Activated CD4-positive, alpha-beta T cell treated with anti-CD3 and anti-CD28 coated beads, Interleukin-2, amount 10 ng/mL, durations not matched to agents 24 days and 14 days (primary cell): ENCODE measurements at regions of chr5 and their contacts with region 1.

Region 1: GRCh38 chr5:74576941-74577456 is 63.5 kb downstream of the ENC1 start:
- DNase-seq: peak; percentile 79
- H3K4me3 Mint-ChIP-seq: peak overlapping the region; percentile 50
- H3K27ac Mint-ChIP-seq: peak overlapping the region; percentile 30
- H3K4me1 Mint-ChIP-seq: peaks cover 35% of the 10 kb centered on the region
- H3K27me3 Mint-ChIP-seq: peaks cover 5% of the 10 kb centered on the region

Region 2: GRCh38 chr5:73902327-73903051 is 674.5 kb before region 1 on chr5:
- intact Hi-C with region 1: loop called (anchors 2 kb)
- DNase-seq: peak; percentile 70
- H3K4me3 Mint-ChIP-seq: no peak overlapping the region
- H3K27ac Mint-ChIP-seq: no peak overlapping the region
- H3K4me1 Mint-ChIP-seq: peaks cover 4% of the 10 kb centered on the region
- H3K27me3 Mint-ChIP-seq: peaks cover 26% of the 10 kb centered on the region

Region 3: DNA sequence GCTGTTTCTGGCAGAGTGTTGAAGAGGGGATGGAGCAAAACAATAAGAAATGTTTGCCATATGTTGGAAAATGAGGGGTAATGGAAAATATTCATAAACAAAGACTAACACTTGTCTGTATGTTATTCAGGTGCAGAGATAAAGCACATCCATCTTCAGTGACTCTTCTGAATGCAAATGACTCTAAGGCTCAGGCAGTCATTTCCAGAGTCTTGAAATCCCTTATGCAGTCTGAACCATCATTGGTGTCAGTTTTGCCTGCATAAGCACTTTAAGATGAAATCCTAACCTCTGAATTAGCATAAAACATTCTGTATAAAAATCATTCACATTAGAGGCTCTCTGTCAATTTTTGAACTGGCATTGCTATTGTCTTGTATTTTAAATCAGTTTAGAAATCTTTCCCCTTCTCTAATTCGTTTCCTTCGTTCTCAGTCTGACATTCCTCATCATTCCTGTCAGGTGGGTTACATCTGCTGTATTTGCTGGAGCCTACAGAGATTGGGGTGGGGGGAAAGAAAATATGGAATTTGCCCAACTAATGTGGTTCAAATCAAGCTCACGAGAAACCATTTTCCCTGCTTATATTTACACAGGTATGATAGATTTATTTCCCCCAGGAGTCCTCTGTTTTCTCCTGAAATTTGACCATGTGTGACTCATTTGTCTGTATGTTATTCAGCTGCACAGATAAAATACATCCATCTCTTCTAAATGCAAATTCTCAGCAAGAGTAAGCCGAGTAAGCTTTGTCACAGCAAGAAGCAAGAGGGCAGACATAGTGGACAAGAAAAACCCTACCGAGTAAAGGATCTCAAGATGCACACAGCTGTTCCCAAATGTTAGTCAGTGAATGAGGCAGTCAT is 32.0 kb after region 1 on chr5:
- intact Hi-C with region 1: no loop called
- DNase-seq: no peak
- H3K4me3 Mint-ChIP-seq: no peak overlapping the region
- H3K27ac Mint-ChIP-seq: no peak overlapping the region
- H3K4me1 Mint-ChIP-seq: no peaks in the 10 kb centered on the region
- H3K27me3 Mint-ChIP-seq: peaks cover 29% of the 10 kb centered on the region

Region 4: GRCh38 chr5:74622122-74622521 is 45.1 kb after region 1 on chr5:
- intact Hi-C with region 1: loop called (anchors 1 kb)
- DNase-seq: no peak
- H3K4me3 Mint-ChIP-seq: no peak overlapping the region
- H3K27ac Mint-ChIP-seq: no peak overlapping the region
- H3K4me1 Mint-ChIP-seq: peaks cover 8% of the 10 kb centered on the region
- H3K27me3 Mint-ChIP-seq: peaks cover 48% of the 10 kb centered on the region

Region 5: DNA sequence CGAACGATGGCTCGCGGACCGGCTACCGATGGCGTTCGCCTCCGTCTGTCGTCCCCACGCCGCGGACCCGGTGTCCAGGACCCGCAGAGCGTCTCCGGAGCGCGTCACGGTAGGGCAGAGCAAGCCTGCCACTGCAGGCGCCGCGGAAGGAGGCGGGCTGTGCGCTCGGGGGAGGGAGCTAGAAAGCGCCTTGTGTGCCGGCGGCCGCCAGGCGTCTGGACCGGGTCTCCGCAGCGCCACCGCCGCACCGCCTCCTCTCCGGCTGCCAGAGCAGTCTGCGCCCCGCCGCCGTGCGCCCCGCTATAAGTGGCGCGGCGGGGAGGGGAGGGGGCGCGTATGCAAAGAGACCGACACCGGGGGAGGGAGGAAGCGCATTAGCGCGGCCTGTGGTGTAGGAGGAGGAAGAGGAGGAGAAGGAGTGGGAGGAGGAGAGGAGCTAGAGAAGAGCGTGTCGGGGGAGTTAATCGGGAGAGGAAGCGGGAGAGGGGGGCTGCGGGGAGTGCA is 63.5 kb after region 1 on chr5 and contains the start of gene ENC1:
- intact Hi-C with region 1: loop called (anchors 1 kb)
- DNase-seq: peak; percentile 93
- H3K4me3 Mint-ChIP-seq: peak within 1 kb of the TSS; percentile 91
- H3K27ac Mint-ChIP-seq: peak within 1 kb of the TSS; percentile 47
- H3K4me1 Mint-ChIP-seq: peaks cover 35% of the 10 kb centered on the region
- H3K27me3 Mint-ChIP-seq: peaks cover 63% of the 10 kb centered on the region
- total RNA-seq, gene ENC1: 1.2 and 2.0 TPM in 2 replicates

Region 6: DNA sequence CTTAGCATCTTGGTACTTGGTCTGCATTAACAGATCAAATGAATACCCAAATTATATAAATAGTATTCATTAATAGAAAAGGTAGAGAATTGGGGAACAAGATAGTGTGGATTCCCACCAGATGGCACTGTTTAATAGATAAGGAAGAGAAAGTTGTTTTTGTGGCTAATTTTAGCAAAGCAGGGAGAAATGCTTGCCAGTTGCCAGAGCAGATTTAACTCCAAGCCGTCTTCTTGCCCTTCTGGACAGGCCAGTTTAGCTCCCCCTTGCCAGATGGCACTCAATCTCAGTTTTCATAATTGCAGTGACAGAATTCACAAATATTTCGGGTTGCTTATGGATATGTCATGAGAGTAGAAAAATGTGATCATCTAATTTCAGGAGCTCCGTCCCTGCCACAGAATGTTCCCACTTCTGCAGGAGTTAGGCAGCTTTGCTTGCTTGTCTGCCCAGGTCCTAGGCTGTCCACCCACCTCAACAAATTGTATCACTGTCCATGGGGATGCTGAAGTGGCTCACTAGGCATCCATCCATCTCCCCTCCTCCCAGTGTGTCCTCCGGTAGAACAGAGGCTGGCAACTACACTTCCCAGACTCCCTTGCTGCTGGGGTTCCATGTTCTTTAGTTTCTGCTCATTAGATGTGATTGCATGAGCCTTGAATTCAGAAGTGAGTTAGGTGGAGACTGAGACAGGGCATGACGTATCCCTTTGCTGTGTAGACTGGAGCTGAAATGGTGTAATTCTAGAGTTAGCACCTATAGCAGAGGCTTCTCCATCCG is 96.2 kb after region 1 on chr5:
- intact Hi-C with region 1: no loop called
- DNase-seq: no peak
- H3K4me3 Mint-ChIP-seq: no peak overlapping the region
- H3K27ac Mint-ChIP-seq: no peak overlapping the region
- H3K4me1 Mint-ChIP-seq: no peaks in the 10 kb centered on the region
- H3K27me3 Mint-ChIP-seq: peaks cover 23% of the 10 kb centered on the region

Region 7: GRCh38 chr5:75717082-75717922 is 1140.3 kb after region 1 on chr5 and contains the start of gene POC5:
- intact Hi-C with region 1: loop called (anchors 5 kb)
- DNase-seq: peak; percentile 99
- H3K4me3 Mint-ChIP-seq: peak within 1 kb of the TSS; percentile 100
- H3K27ac Mint-ChIP-seq: peak within 1 kb of the TSS; percentile 100
- H3K4me1 Mint-ChIP-seq: peaks cover 29% of the 10 kb centered on the region
- H3K27me3 Mint-ChIP-seq: peaks cover 7% of the 10 kb centered on the region
- total RNA-seq, gene POC5: 20.8 and 21.3 TPM in 2 replicates